ENCODE measurements at regions of chr6 and their contacts with region 1.

Region 1: GRCh38 chr6:5260661-5261544 is at the starts of genes FARS2 and LYRM4:
- DNase-seq: peak; percentile 94
- ATAC-seq: peak; percentile 80
- H3K4me3 Mint-ChIP-seq: peak within 1 kb of the TSS; percentile 92
- H3K27ac Mint-ChIP-seq: peak within 1 kb of the TSS; percentile 97
- H3K4me1 Mint-ChIP-seq: peaks cover 36% of the 10 kb centered on the region
- H3K27me3 Mint-ChIP-seq: no peaks in the 10 kb centered on the region
- total RNA-seq, gene FARS2: 17.6 to 18.4 TPM
- total RNA-seq, gene LYRM4: 46.4 to 53.4 TPM

Region 2: DNA sequence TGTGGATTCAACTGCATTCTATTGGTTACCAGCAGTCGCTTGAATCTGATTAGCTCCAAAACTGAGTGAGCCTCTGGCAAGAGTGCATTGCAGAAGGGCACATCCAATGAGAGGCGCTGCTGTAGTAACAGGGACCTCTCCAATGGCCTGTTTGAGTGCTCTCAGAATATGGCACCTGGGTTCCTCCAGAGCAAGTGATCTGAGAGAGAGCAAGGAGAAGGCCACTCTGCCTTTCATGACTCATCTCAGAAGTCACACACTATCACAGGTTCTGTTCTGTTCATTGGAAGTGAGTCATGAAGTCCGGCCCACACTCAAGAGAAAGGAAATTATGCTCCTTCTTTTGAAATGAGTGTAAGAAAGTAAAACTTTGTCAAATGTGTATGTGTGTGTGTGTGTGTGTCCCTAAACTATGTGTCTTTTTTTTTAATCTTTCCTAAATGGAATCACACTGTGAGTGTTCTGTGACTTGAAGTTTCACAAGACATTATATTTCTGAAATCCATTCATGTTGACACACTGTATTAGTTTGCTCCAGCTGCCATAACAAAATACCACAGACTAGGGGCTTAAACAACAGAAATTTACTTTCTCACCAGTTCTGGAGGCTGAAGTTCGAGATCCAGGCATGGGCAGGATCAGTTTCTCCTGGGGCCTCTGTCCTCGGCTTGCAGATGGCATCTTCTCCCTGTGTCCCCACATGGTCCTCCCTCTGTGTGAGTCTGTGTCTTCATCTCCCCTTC is 623.0 kb before region 1 on chr6:
- CTCF ChIA-PET with region 1: no interaction called
- POLR2A ChIA-PET with region 1: no interaction called
- intact Hi-C with region 1: loop called in 1 of 2 experiments (anchors 5 kb)
- DNase-seq: peak; percentile 69
- ATAC-seq: peak; percentile 99
- H3K4me3 Mint-ChIP-seq: no peak overlapping the region
- H3K27ac Mint-ChIP-seq: peak overlapping the region; percentile 78
- H3K4me1 Mint-ChIP-seq: peaks cover 27% of the 10 kb centered on the region
- H3K27me3 Mint-ChIP-seq: peaks cover 33% of the 10 kb centered on the region

Region 3: GRCh38 chr6:5143634-5144311 is 117.1 kb before region 1 on chr6:
- CTCF ChIA-PET with region 1: interaction called, 5 read pairs
- POLR2A ChIA-PET with region 1: no interaction called
- intact Hi-C with region 1: loop called in 1 of 2 experiments (anchors 2 kb)
- DNase-seq: peak; percentile 91
- ATAC-seq: peak; percentile 71
- H3K4me3 Mint-ChIP-seq: no peak overlapping the region
- H3K27ac Mint-ChIP-seq: no peak overlapping the region
- H3K4me1 Mint-ChIP-seq: no peaks in the 10 kb centered on the region
- H3K27me3 Mint-ChIP-seq: no peaks in the 10 kb centered on the region

Region 4: DNA sequence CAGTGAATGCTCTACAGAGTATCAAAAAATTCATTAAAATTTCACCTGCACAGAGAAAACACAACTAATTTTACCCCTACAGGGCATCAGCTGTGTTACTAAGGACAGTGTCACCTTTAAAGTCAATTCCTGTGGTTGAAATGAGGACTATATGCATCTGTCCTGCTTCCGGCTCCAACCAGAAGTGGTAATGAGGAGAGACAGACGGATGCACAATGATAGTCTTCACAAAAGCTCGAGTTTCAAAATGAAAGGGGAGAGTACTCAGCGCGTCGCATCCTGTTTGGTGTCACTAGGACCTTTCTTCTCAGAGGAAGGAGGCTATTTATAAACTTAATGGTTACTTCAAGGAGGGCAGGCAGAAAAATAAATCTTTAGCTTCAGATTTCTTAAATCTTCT is 86.7 kb before region 1 on chr6:
- CTCF ChIA-PET with region 1: no interaction called
- POLR2A ChIA-PET with region 1: no interaction called
- intact Hi-C with region 1: loop called in 1 of 2 experiments (anchors 1 kb)
- DNase-seq: peak; percentile 79
- ATAC-seq: peak; percentile 96
- H3K4me3 Mint-ChIP-seq: peak overlapping the region; percentile 57
- H3K27ac Mint-ChIP-seq: peak overlapping the region; percentile 93
- H3K4me1 Mint-ChIP-seq: peaks cover 54% of the 10 kb centered on the region
- H3K27me3 Mint-ChIP-seq: no peaks in the 10 kb centered on the region

Region 5: DNA sequence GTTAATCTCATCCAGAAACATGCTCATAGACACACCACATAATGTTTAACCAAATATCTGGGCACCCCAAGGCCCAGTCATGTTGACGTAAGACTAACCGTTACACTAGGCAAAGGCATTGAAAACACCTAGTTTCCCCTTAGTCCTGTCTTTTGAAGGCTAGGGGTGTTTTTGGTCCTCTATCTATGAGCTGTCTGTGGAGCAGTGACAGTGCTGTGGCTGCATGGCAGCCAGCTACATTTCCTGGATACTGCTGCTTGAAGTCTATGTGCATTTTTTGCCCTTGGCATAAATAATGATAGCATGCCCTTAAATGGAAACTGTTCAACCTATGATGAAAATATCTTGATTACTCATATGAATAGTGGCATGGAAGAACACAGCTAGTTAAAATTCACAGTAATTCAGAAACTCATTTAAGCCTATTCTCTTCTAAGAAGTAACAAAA is 19.0 kb after region 1 on chr6:
- CTCF ChIA-PET with region 1: interaction called, 9 read pairs
- POLR2A ChIA-PET with region 1: interaction called, 10 read pairs
- intact Hi-C with region 1: loop called (anchors 1 kb)
- DNase-seq: peak; percentile 71
- ATAC-seq: peak; percentile 92
- H3K4me3 Mint-ChIP-seq: peak overlapping the region; percentile 10
- H3K27ac Mint-ChIP-seq: peak overlapping the region; percentile 91
- H3K4me1 Mint-ChIP-seq: peaks cover 43% of the 10 kb centered on the region
- H3K27me3 Mint-ChIP-seq: no peaks in the 10 kb centered on the region

Region 6: GRCh38 chr6:5302995-5303622 is 42.2 kb after region 1 on chr6:
- CTCF ChIA-PET with region 1: interaction called, 7 read pairs
- POLR2A ChIA-PET with region 1: interaction called, 3 read pairs
- intact Hi-C with region 1: loop called (anchors 1 kb)
- DNase-seq: peak; percentile 78
- ATAC-seq: peak; percentile 68
- H3K4me3 Mint-ChIP-seq: peak overlapping the region; percentile 43
- H3K27ac Mint-ChIP-seq: peak overlapping the region; percentile 84
- H3K4me1 Mint-ChIP-seq: peaks cover 54% of the 10 kb centered on the region
- H3K27me3 Mint-ChIP-seq: no peaks in the 10 kb centered on the region

Measured in activated CD4-positive, alpha-beta T cell treated with anti-CD3 and anti-CD28 coated beads for 36 hours (primary cell).